ENCODE measurements at regions of chrX and their contacts with region 1.

Region 1: DNA sequence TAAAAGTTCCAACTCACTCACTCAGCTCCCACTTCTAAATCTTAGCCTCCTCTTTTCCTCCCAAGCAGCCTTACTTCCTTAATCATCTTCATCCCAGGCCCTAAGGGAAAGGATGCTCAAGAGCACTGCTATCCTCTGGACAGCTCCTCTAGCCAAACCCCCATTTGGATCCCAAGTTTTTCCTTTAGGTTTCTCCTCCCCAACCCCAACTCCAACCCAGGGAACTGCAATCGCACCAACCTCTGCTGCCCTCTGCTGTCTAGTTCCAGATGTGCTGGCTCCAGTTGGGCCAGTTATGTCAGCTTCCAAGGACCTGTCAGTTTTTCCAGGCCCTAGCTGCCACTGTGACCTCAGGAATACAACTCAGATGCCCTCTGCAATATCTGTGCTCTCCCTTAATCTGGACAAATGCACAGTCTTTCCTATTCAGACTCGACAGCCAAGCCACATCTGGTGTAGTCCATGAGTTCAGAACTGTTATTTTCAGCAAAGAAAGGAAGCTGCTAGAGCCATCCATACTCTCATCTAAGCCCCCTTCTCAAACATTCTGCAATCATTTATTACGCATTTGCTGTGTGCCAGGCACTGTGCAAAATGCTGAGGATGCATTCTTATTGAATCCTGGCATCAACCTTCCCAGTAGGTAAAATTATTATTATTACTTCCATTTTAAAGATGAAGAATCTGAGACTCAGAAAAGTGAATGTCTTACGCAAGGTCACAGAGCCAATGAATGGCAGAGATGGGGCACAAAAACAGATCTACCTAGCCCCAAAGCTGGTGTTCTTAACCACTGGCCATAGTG is 12.3 kb upstream of the XPNPEP2 start:
- DNase-seq: peak; percentile 74
- H3K4me3 ChIP-seq: no peak overlapping the region
- H3K27ac ChIP-seq: no peak overlapping the region
- H3K4me1 ChIP-seq: no peaks in the 10 kb centered on the region
- H3K27me3 ChIP-seq: no peaks in the 10 kb centered on the region
- CTCF ChIP-seq: peak; percentile 57 to 68 (median 62)
- EP300 ChIP-seq: no peak
- POLR2A ChIP-seq: no peak

Region 2: GRCh38 chrX:129553619-129554288 is 172.8 kb before region 1 on chrX:
- intact Hi-C with region 1: no loop called
- DNase-seq: no peak
- H3K4me3 ChIP-seq: no peak overlapping the region
- H3K27ac ChIP-seq: no peak overlapping the region
- H3K4me1 ChIP-seq: no peaks in the 10 kb centered on the region
- H3K27me3 ChIP-seq: no peaks in the 10 kb centered on the region
- CTCF ChIP-seq: no peak
- EP300 ChIP-seq: no peak
- POLR2A ChIP-seq: no peak

Region 3: GRCh38 chrX:129637217-129638109 is 89.0 kb before region 1 on chrX:
- intact Hi-C with region 1: loop called (anchors 1 kb)
- DNase-seq: peak; percentile 86
- H3K4me3 ChIP-seq: no peak overlapping the region
- H3K27ac ChIP-seq: no peak overlapping the region
- H3K4me1 ChIP-seq: no peaks in the 10 kb centered on the region
- H3K27me3 ChIP-seq: no peaks in the 10 kb centered on the region
- CTCF ChIP-seq: peak; percentile 68 to 79 (median 73)
- EP300 ChIP-seq: no peak
- POLR2A ChIP-seq: no peak

Measured in sigmoid colon (tissue), 7 donors.